ENCODE measurements at regions of chr18 and their contacts with region 1.

Region 1: DNA sequence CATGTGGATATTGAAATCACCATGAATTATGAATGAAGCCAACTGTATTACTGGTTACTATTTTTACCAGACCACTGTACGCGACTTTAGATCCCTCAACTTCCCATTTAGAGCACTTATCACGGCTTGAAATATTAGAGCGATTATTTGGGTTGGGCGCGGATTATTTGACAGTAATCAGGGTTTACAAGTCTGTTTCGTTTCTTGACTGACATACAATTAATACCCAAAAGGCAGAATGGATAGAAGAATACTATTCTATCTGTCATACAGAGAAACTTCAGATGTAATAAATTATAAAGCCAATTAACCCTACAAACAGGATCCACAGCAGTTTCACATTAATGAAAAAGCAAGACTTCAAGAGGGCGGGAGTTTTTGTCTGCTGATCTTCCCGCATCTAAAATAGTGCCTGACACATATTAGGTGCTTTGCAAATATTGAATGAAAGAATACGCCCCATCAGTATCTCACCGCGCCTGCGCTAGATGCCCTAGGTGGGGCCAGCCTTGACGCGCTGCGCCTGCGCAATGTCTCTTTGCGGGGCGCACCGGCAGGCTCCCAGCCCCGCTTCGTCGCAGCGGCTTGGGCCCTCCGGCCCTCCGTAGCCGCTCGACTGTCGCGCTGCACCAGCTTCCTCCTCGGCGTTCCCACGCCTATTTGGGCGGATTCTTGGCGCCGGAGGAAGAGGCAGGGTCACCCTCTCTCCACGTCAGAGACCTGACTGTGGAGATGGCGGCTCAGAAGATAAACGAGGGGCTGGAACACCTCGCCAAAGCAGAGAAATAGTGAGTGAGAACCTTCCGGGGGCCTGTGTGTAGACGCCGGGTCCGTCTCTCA is at the start of gene NAPG:
- DNase-seq: peak; percentile 91 to 92 (median 92)
- H3K4me3 ChIP-seq: peak within 1 kb of the TSS; percentile 88 to 94 (median 89)
- H3K4me3 Mint-ChIP-seq: peak within 1 kb of the TSS; percentile 93 to 95
- H3K27ac ChIP-seq: peak within 1 kb of the TSS; percentile 84 to 88
- H3K27ac Mint-ChIP-seq: peak within 1 kb of the TSS; percentile 95 to 99 (median 97)
- H3K4me1 ChIP-seq: peaks cover 41 to 52% of the 10 kb centered on the region in 2 donors
- H3K4me1 Mint-ChIP-seq: peaks cover 51% of the 10 kb centered on the region
- H3K27me3 ChIP-seq: no peaks in the 10 kb centered on the region
- H3K27me3 Mint-ChIP-seq: no peaks in the 10 kb centered on the region
- CTCF ChIP-seq: no peak
- polyA plus RNA-seq, gene NAPG: 14.8 to 17.5 (median 15.9) TPM

Region 2: DNA sequence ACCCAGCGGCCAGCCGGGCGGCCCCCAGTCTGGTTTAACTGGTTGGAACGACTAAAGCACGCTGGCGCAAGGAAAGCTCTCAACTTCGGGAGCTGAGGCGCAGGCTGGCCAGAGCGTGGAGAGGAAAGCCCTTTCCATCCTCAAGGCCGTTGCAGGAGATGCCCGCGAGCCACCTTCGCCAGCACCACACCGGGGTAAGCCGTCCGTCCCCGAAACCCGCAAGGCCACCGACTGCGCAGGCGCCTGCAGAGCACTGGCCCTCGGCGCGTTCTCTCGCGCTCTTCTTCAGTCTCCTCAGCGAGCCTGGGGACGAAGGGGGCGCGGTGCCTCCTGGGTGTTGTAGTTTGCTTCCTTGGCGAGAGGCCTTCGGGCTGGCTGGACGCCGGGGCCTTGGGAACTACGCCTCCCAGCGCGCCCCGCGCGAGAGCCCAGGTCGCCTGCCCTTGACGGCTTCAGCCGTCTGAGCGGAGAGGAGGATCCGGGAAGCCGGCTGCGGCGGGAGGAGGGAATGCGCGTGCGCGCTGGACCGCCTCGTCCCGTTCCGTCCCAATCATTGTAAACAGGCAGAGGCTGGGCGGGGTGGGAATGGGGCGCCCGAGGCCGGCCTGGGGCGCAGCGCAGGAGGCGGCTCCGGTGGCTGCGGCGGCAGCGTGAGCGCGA is 1050.5 kb before region 1 on chr18 and contains the start of gene RALBP1:
- intact Hi-C with region 1: loop called in 1 of 2 experiments (anchors 10 kb)
- DNase-seq: peak; percentile 99
- H3K4me3 ChIP-seq: peak within 1 kb of the TSS; percentile 79 to 89 (median 80)
- H3K4me3 Mint-ChIP-seq: peak within 1 kb of the TSS; percentile 88 to 92
- H3K27ac ChIP-seq: peak within 1 kb of the TSS; percentile 84 to 90
- H3K27ac Mint-ChIP-seq: peak within 1 kb of the TSS; percentile 81 to 94 (median 91)
- H3K4me1 ChIP-seq: peaks cover 20 to 25% of the 10 kb centered on the region in 2 donors
- H3K4me1 Mint-ChIP-seq: peaks cover 30% of the 10 kb centered on the region
- H3K27me3 ChIP-seq: no peaks in the 10 kb centered on the region
- H3K27me3 Mint-ChIP-seq: peaks cover 0 to 2% (median 0%) of the 10 kb centered on the region in 3 donors
- CTCF ChIP-seq: no peak
- polyA plus RNA-seq, gene RALBP1: 21.5 to 36.0 (median 32.8) TPM